Colonic mucosa (tissue), 4 donors: ENCODE measurements at regions of chr1 and their contacts with region 1.

Region 1: DNA sequence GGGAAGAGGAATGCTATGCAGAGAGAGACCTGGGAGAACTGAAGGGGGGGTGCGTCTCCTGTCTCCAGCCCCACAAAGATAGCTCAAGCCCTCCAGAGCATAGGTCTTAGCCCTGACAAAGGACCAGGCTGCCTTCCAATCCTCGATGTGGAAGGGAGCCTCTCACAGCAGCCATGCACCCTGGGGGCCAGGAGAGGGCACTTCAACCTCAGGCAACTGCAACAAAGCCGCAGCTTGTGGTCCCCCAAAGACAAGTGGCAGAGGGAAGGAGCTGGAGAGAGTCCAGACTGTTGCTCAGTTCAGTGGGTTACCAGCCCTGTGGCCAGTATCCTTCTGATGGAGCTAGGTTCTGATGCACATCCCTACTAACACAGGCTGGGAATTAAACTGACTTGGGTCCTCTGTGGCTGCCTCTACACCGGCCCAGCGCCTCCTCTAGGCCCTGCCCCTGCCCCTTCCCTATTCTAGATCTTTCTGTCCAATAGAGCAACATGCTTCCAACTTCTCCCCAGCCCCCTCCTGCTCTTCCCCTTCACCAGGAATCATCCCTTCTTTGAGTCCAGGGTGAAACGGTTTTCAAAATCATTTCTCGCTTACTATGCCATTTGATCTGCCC is 100.8 kb upstream of the SPATA6 start:
- DNase-seq: peak; percentile 17
- H3K4me3 ChIP-seq: no peak overlapping the region
- H3K27ac ChIP-seq: no peak overlapping the region
- H3K4me1 ChIP-seq: no peaks in the 10 kb centered on the region
- H3K27me3 ChIP-seq: no peaks in the 10 kb centered on the region
- CTCF ChIP-seq: peak; percentile 29

Region 2: DNA sequence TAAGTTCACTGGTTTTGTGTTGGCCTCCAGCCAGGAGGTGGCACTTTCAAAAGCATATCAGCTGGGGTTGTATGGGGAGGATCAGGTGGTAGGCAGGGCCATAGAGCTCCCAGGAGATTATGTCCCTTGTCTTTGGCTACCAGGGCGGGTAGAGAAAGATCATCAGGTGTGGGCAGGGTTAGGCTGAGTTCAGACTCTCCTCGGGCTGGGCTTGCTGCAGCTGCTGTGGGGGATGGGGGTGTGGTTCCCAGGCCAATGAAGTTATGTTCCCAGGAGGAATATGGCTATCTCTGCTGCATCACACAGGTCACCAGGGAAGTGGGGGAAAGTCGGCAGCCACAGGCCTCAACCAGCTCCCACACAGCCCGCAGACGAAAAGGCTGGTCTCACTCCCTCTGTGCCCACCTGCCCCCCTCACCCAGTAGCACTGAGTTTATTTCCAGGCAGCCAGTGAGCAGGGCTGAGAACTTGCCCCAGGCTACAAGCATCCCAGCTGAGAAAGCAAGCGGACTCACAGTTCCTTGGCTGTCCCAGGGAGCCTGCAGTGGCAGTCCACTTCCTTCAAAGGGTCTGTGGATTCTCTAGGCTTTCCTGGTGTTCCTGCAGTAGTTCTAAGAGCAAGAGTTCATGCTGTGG is 281.5 kb before region 1 on chr1:
- intact Hi-C with region 1: no loop called
- DNase-seq: no peak
- H3K4me3 ChIP-seq: no peak overlapping the region
- H3K27ac ChIP-seq: no peak overlapping the region
- H3K4me1 ChIP-seq: no peaks in the 10 kb centered on the region
- H3K27me3 ChIP-seq: no peaks in the 10 kb centered on the region
- CTCF ChIP-seq: no peak

Region 3: GRCh38 chr1:48697066-48697707 is 124.4 kb after region 1 on chr1:
- intact Hi-C with region 1: loop called (anchors 10 kb)
- DNase-seq: peak; percentile 66
- H3K4me3 ChIP-seq: no peak overlapping the region
- H3K27ac ChIP-seq: no peak overlapping the region
- H3K4me1 ChIP-seq: no peaks in the 10 kb centered on the region
- H3K27me3 ChIP-seq: no peaks in the 10 kb centered on the region
- CTCF ChIP-seq: peak; percentile 87

Region 4: GRCh38 chr1:48817505-48818114 is 244.9 kb after region 1 on chr1:
- intact Hi-C with region 1: loop called (anchors 10 kb)
- DNase-seq: peak; percentile 48
- H3K4me3 ChIP-seq: no peak overlapping the region
- H3K27ac ChIP-seq: no peak overlapping the region
- H3K4me1 ChIP-seq: no peaks in the 10 kb centered on the region
- H3K27me3 ChIP-seq: no peaks in the 10 kb centered on the region
- CTCF ChIP-seq: peak; percentile 60